ENCODE measurements at regions of chr6 and their contacts with region 1.

Region 1: DNA sequence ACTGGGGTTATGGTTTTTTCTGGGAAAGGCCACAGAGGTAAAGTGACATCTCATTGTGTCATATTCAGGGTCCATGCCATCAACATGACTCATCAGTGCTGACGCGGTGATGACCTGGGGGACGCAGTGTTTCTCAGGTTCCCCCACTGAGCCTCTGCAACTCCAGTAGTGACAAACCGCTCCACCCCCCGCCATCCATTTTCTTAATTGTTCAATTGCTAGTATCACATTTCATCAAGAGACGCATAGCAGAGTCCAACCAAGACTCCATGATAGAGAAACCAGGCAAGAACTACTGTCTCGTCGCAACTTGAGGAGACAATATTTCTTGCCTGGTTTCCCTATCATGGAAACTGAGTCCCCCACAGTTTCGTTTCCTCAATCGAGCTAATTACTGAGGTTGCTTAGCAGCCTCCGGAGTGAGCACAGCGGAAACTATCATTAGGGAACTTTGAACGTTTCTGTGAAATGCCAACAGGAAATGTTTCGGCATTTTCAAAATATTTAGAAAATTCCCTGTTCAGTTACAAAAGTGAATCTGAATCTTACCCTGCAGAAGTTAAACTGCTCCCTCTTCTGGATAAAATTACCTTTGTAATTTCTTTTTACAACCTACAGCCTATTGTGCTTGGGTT is 12.2 kb upstream of the SERPINB1 start:
- DNase-seq: no peak
- ATAC-seq: peak; percentile 35

Region 2: GRCh38 chr6:2900821-2901644 is 47.2 kb after region 1 on chr6:
- intact Hi-C with region 1: loop called (anchors 10 kb)
- DNase-seq: no peak
- ATAC-seq: no peak

Measured in left ventricle myocardium superior (tissue), 1 donor.